Naive thymus-derived CD8-positive, alpha-beta T cell (primary cell): ENCODE measurements at regions of chr1 and their contacts with region 1.

Region 1: DNA sequence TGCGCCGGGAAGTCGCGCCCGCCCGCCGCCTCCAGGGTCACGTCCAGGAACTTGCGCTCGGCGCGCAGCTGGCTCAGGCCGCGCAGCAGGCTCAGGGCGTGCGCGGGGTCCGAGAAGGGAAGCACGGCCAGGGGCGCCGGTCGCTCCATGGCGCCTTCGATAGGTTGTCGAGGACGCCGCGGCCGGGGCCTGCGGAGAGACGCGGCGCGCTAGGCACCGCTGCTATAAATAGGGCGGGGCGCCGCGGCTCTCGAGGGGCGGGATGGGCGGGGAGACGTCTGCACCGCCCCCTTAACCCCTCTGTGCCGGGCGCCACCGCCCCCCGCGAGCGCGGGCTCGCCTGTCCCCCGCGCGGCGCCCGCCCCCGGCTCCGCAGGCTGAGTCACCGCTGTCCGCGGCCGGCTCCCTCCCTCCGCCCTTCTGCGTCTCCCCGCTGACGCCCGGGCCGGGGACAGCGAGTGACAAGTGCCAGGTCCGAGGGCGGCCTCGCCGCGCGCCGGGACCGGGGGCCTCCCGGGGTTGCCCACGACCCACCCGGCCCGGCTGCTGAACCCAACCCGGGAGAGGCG is at the start of gene KLHL21:
- DNase-seq: peak; percentile 72 to 90 (median 81)
- ATAC-seq: peak; percentile 52 to 62
- H3K4me3 Mint-ChIP-seq: peak within 1 kb of the TSS; percentile 96 to 99 (median 99)
- H3K27ac Mint-ChIP-seq: peak within 1 kb of the TSS; percentile 95 to 99 (median 98)
- H3K4me1 Mint-ChIP-seq: peaks cover 13 to 43% (median 39%) of the 10 kb centered on the region in 4 donors
- H3K27me3 Mint-ChIP-seq: no peaks in the 10 kb centered on the region
- polyA plus RNA-seq, gene KLHL21: 15.7 to 26.4 (median 16.3) TPM

Region 2: GRCh38 chr1:6489799-6490180 is 113.0 kb before region 1 on chr1:
- POLR2A ChIA-PET with region 1: interaction called, 12 read pairs
- DNase-seq: peak; percentile 57 to 84 (median 75)
- ATAC-seq: peak; percentile 62 to 70
- H3K4me3 Mint-ChIP-seq: peak overlapping the region; percentile 68 to 87 (median 76)
- H3K27ac Mint-ChIP-seq: peak overlapping the region in 3 of 10 donors; percentile 19 to 67 (median 58)
- H3K4me1 Mint-ChIP-seq: peaks cover 25 to 43% (median 30%) of the 10 kb centered on the region in 4 donors
- H3K27me3 Mint-ChIP-seq: peaks cover 5 to 31% (median 18%) of the 10 kb centered on the region in 5 donors

Region 3: GRCh38 chr1:6579374-6580118 is 23.2 kb before region 1 on chr1 and contains the start of gene ZBTB48:
- POLR2A ChIA-PET with region 1: interaction called, 145 read pairs
- DNase-seq: peak; percentile 93 to 98 (median 95)
- ATAC-seq: peak; percentile 97 to 98
- H3K4me3 Mint-ChIP-seq: peak within 1 kb of the TSS; percentile 91 to 99 (median 96)
- H3K27ac Mint-ChIP-seq: peak within 1 kb of the TSS; percentile 88 to 99 (median 97)
- H3K4me1 Mint-ChIP-seq: peaks cover 9 to 44% (median 39%) of the 10 kb centered on the region in 4 donors
- H3K27me3 Mint-ChIP-seq: no peaks in the 10 kb centered on the region
- polyA plus RNA-seq, gene ZBTB48: 9.8 to 30.0 (median 28.7) TPM

Region 4: DNA sequence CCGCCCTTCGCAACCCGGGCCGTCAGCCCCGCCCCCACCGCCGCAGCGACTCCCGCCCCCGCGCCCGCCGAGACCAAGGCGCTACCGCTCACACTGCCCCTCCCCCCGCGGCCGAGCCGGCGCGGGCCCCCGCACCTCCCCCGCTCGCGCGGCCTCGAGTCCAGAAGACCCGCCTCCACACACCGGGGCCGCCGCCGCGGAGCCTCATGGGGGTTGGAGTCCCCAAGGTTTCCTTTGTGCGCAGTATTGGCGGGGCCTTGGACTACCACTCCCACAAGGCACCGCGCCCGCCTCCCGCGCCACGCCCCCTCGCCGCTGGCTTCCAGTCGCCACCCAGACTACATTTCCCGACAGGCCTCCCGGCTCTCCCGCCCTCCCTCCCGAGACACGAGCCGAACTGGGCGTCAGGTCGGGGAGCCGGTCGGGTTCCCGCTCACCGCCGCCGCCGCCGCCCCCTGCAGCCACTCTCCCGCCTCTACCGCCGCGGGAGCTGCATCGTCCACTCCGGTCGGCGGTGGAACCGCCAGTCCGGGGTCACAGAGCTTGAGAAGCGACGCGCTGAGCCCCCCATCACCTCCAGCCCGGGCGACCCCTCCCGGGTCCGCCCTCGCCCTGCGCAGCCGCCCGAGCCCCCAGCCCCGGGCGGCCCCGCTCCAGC is 10.7 kb after region 1 on chr1 and contains the start of gene PHF13:
- POLR2A ChIA-PET with region 1: interaction called, 156 read pairs
- DNase-seq: peak; percentile 96 to 100 (median 99)
- ATAC-seq: peak; percentile 90 to 97
- H3K4me3 Mint-ChIP-seq: peak within 1 kb of the TSS; percentile 85 to 96 (median 93)
- H3K27ac Mint-ChIP-seq: peak within 1 kb of the TSS; percentile 40 to 98 (median 91)
- H3K4me1 Mint-ChIP-seq: peaks cover 11 to 41% (median 24%) of the 10 kb centered on the region in 4 donors
- H3K27me3 Mint-ChIP-seq: no peaks in the 10 kb centered on the region
- polyA plus RNA-seq, gene PHF13: 1.4 to 4.3 (median 3.2) TPM

Region 5: GRCh38 chr1:6653436-6654290 is 50.9 kb after region 1 on chr1:
- POLR2A ChIA-PET with region 1: no interaction called
- DNase-seq: no peak
- ATAC-seq: no peak
- H3K4me3 Mint-ChIP-seq: no peak overlapping the region
- H3K27ac Mint-ChIP-seq: peak overlapping the region in 2 of 10 donors; percentile 7 to 42
- H3K4me1 Mint-ChIP-seq: peaks cover 0 to 12% (median 5%) of the 10 kb centered on the region in 4 donors
- H3K27me3 Mint-ChIP-seq: no peaks in the 10 kb centered on the region

Region 6: DNA sequence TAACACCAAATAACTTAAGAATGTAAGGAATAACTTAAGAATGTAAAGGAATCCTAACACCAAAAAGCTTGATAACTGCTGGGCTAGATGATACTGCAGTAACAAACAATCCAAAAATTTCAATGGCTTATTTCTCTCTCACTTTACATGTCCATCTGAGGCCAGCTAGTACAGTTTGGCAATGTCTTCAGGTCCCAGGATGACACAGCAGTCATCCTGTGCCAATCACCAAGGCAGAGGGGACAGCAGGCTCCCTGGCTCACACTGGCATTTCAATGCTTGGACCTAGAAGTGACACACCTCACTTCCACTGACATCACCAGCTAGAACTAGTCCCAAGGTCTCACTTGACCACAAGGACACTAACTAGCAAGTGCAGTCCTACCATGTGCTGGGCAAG is 83.5 kb after region 1 on chr1:
- POLR2A ChIA-PET with region 1: no interaction called
- DNase-seq: no peak
- ATAC-seq: no peak
- H3K4me3 Mint-ChIP-seq: no peak overlapping the region
- H3K27ac Mint-ChIP-seq: no peak overlapping the region
- H3K4me1 Mint-ChIP-seq: peaks cover 9 to 19% (median 14%) of the 10 kb centered on the region in 4 donors
- H3K27me3 Mint-ChIP-seq: no peaks in the 10 kb centered on the region